ENCODE measurements at regions of chr20 and their contacts with region 1.

Region 1: GRCh38 chr20:51402201-51402600 is 140.3 kb downstream of the NFATC2 start:
- DNase-seq: peak in 1 of 2 donors; percentile 30
- H3K4me3 ChIP-seq: no peak overlapping the region
- H3K27ac ChIP-seq: no peak overlapping the region
- H3K4me1 ChIP-seq: no peaks in the 10 kb centered on the region
- H3K27me3 ChIP-seq: no peaks in the 10 kb centered on the region
- CTCF ChIP-seq: no peak
- POLR2A ChIP-seq: no peak

Region 2: GRCh38 chr20:50095476-50096078 is 1306.6 kb before region 1 on chr20:
- intact Hi-C with region 1: no loop called
- DNase-seq: no peak
- H3K4me3 ChIP-seq: no peak overlapping the region
- H3K27ac ChIP-seq: no peak overlapping the region
- H3K4me1 ChIP-seq: no peaks in the 10 kb centered on the region
- H3K27me3 ChIP-seq: no peaks in the 10 kb centered on the region
- CTCF ChIP-seq: no peak
- POLR2A ChIP-seq: no peak

Region 3: GRCh38 chr20:51417250-51418136 is 15.3 kb after region 1 on chr20:
- intact Hi-C with region 1: loop called (anchors 1 kb)
- DNase-seq: no peak
- H3K4me3 ChIP-seq: no peak overlapping the region
- H3K27ac ChIP-seq: peak overlapping the region; percentile 18 to 32
- H3K4me1 ChIP-seq: peaks cover 2 to 4% of the 10 kb centered on the region in 2 donors
- H3K27me3 ChIP-seq: no peaks in the 10 kb centered on the region
- CTCF ChIP-seq: no peak
- POLR2A ChIP-seq: no peak

Region 4: GRCh38 chr20:51600016-51600420 is 197.8 kb after region 1 on chr20:
- intact Hi-C with region 1: no loop called
- DNase-seq: no peak
- H3K4me3 ChIP-seq: no peak overlapping the region
- H3K27ac ChIP-seq: peak overlapping the region in 1 of 2 donors; percentile 32
- H3K4me1 ChIP-seq: no peaks in the 10 kb centered on the region
- H3K27me3 ChIP-seq: no peaks in the 10 kb centered on the region
- CTCF ChIP-seq: no peak
- POLR2A ChIP-seq: no peak

Region 5: DNA sequence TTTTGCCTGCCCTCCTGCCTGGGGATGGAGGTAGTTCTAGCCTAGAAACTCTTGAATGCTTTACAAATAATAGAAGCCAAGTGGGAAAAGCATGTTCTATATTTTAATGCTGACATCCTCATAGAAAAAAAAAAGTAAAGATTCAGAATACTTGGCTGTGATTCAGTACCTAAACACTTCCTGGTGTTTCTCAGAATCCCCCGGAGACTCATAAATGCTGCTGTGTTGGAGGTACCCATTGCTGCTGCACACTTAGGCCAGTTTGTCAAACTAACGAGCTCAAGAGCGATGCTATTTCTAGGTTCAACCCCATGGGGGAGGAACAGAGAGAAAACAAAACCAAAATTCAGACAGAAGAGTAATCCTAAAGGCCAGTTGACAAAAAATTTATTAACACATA is 828.2 kb after region 1 on chr20:
- intact Hi-C with region 1: no loop called
- DNase-seq: no peak
- H3K4me3 ChIP-seq: no peak overlapping the region
- H3K27ac ChIP-seq: no peak overlapping the region
- H3K4me1 ChIP-seq: no peaks in the 10 kb centered on the region
- H3K27me3 ChIP-seq: peaks cover 0 to 3% of the 10 kb centered on the region in 2 donors
- CTCF ChIP-seq: no peak
- POLR2A ChIP-seq: no peak

Measured in breast epithelium (tissue), 4 donors.